Esophagus muscularis mucosa (tissue), 4 donors: ENCODE measurements at regions of chr18 and their contacts with region 1.

Region 1: GRCh38 chr18:9803698-9804516 is 81.9 kb upstream of the TXNDC2 start:
- DNase-seq: no peak
- H3K4me3 ChIP-seq: peak overlapping the region in 2 of 4 donors; percentile 19 to 20
- H3K27ac ChIP-seq: peak overlapping the region; percentile 70 to 74 (median 72)
- H3K4me1 ChIP-seq: peaks cover 31 to 60% (median 58%) of the 10 kb centered on the region in 4 donors
- H3K27me3 ChIP-seq: no peaks in the 10 kb centered on the region
- CTCF ChIP-seq: no peak
- EP300 ChIP-seq: no peak
- POLR2A ChIP-seq: no peak

Region 2: DNA sequence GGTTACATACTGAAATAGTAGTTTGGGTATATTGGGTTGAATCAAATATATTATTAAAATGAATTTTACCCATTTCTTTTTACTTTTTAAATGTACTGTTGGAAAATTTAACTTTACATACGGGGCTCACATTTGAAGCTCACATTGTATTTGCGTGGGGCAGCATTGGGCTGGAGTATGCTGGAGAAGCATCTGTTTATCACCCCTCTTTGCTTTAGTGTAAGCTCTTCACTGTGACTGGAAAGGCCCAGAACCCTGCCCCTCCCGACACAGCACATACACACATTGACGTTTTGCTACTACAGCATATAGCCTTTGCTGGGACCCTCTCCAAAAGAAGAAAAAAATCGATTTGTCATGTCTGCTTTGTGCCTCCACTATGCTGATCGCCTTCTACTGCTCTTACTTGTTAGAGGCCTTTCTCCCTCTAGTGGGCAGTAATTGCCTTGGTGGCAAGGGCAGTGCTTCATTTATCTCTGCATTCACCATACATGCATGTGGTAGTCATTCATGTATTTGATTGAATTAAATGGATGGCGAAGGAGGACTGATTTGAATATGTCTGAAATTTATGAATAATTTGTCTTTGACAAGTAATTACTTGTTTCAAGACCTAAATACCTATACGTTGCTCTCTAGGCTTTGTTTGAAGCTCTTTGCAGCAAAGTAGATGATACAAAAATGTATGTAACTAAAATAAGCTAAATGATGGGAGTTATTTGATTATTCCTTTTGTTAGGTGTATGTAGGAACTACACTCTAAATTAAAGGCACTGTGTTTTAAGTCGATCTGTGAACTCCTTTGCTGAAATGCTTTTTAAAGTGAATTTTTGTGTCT is 147.3 kb after region 1 on chr18:
- intact Hi-C with region 1: loop called (anchors 5 kb)
- DNase-seq: no peak
- H3K4me3 ChIP-seq: no peak overlapping the region
- H3K27ac ChIP-seq: peak overlapping the region in 1 of 4 donors; percentile 5
- H3K4me1 ChIP-seq: peaks cover 5 to 44% (median 12%) of the 10 kb centered on the region in 4 donors
- H3K27me3 ChIP-seq: no peaks in the 10 kb centered on the region
- CTCF ChIP-seq: peak; percentile 50 to 73 (median 63)
- EP300 ChIP-seq: no peak
- POLR2A ChIP-seq: no peak

Region 3: GRCh38 chr18:10121786-10122542 is 318.1 kb after region 1 on chr18:
- intact Hi-C with region 1: no loop called
- DNase-seq: no peak
- H3K4me3 ChIP-seq: no peak overlapping the region
- H3K27ac ChIP-seq: no peak overlapping the region
- H3K4me1 ChIP-seq: peaks cover 11 to 19% (median 15%) of the 10 kb centered on the region in 4 donors
- H3K27me3 ChIP-seq: no peaks in the 10 kb centered on the region
- CTCF ChIP-seq: no peak
- EP300 ChIP-seq: no peak
- POLR2A ChIP-seq: no peak